Activated B cell treated with CpG ODN at 0.5 μM for 24 hours (primary cell): ENCODE measurements at regions of chr15 and their contacts with region 1.

Region 1: DNA sequence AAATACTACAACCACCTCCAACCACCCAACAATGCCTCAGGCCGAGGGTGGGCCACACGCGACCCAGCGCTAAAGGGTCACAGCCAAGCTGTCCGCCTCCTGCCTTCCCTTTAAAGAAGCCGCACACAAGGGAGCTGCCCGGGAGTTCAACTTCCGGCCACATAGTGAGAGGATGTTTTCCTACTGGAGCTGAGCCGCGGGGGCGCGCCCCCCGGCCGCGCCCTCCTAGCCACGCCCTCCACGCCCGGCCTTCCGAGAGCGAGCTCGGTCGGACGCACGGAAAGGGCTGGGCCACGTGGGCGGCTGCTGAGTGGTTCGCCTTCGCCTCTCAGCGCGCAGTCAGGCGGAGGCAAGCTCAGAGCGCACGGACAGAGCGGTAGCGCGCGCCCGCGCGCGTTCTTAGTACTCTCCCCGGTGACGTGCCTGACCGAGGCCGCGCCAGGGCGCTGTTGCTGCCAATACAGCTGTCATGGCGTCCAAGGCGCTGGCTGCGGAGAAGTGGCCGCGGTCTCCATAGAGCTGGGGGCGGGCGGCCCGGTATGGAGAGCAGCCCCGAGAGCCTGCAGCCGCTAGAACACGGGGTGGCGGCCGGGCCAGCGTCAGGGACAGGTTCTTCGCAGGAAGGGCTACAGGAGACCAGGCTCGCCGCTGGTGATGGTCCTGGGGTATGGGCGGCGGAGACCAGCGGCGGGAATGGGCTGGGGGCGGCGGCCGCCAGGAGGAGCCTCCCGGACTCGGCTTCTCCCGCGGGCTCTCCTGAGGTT is at the start of gene MINDY2:
- DNase-seq: peak; percentile 89
- ATAC-seq: peak; percentile 94
- H3K4me3 Mint-ChIP-seq: peak within 1 kb of the TSS; percentile 93
- H3K27ac Mint-ChIP-seq: peak within 1 kb of the TSS; percentile 96
- H3K4me1 Mint-ChIP-seq: peaks cover 6% of the 10 kb centered on the region
- H3K27me3 Mint-ChIP-seq: no peaks in the 10 kb centered on the region
- CTCF ChIP-seq: no peak
- total RNA-seq, gene MINDY2: 5.8 and 6.2 TPM in 2 replicates

Region 2: DNA sequence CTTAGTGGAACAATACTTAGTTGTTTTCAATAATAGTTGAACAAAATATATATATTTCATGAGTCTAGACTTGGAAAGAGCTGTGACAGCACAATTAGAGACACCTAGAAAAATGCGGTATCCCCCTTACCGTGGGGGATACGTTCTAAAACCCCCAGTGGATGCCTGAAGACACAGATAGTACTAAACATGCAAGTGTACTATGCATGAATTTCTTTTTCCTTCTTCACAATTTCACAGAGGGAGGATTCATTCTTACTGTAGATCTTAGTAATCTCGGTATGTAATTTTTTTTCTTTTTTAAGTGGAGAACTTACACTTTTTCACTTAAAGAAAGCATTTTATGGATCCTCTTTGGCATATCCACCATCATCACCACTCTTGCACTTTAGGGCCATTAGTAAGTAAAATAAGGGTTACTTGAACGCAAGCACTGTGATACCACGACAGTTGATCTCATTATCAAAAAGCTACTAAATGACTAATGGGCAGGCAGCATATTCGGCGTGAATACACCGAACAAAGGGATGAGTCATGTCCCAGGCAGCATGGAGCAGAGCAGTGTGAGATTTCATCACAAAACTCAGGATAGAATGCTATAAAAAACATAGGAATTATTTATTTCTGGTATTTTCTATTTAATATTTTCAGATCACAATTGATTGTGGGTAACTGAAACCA is 1965.4 kb before region 1 on chr15:
- CTCF ChIA-PET with region 1: no interaction called
- POLR2A ChIA-PET with region 1: no interaction called
- intact Hi-C with region 1: no loop called
- DNase-seq: no peak
- ATAC-seq: peak; percentile 77
- H3K4me3 Mint-ChIP-seq: peak overlapping the region; percentile 74
- H3K27ac Mint-ChIP-seq: peak overlapping the region; percentile 68
- H3K4me1 Mint-ChIP-seq: peaks cover 30% of the 10 kb centered on the region
- H3K27me3 Mint-ChIP-seq: no peaks in the 10 kb centered on the region
- CTCF ChIP-seq: no peak

Region 3: DNA sequence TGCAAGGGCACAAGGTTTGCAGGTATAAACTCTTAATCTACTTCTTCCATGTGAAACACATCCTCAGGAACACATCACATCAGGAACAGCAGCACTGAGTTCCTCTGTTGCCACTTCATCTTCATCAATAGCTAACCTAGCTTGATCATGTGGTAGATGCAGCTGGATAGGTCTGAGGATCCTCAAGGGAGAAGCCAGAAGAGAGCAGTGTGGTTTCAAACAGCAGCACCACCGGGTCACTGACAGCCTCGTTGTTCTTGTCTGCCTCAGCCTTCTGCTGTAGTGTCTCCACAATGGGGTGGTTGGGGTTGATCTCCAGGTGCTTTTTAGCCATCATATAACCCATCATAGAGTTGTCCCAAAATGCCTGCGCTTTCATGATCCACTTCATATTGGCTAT is 80.3 kb before region 1 on chr15:
- CTCF ChIA-PET with region 1: interaction called, 8 read pairs
- POLR2A ChIA-PET with region 1: interaction called, 7 read pairs
- intact Hi-C with region 1: loop called (anchors 1 kb)
- DNase-seq: no peak
- ATAC-seq: peak; percentile 97
- H3K4me3 Mint-ChIP-seq: no peak overlapping the region
- H3K27ac Mint-ChIP-seq: no peak overlapping the region
- H3K4me1 Mint-ChIP-seq: peaks cover 33% of the 10 kb centered on the region
- H3K27me3 Mint-ChIP-seq: no peaks in the 10 kb centered on the region
- CTCF ChIP-seq: no peak

Region 4: GRCh38 chr15:58732625-58733363 is 38.2 kb before region 1 on chr15:
- CTCF ChIA-PET with region 1: no interaction called
- POLR2A ChIA-PET with region 1: no interaction called
- intact Hi-C with region 1: no loop called
- DNase-seq: no peak
- ATAC-seq: no peak
- H3K4me3 Mint-ChIP-seq: no peak overlapping the region
- H3K27ac Mint-ChIP-seq: no peak overlapping the region
- H3K4me1 Mint-ChIP-seq: peaks cover 70% of the 10 kb centered on the region
- H3K27me3 Mint-ChIP-seq: no peaks in the 10 kb centered on the region
- CTCF ChIP-seq: no peak

Region 5: DNA sequence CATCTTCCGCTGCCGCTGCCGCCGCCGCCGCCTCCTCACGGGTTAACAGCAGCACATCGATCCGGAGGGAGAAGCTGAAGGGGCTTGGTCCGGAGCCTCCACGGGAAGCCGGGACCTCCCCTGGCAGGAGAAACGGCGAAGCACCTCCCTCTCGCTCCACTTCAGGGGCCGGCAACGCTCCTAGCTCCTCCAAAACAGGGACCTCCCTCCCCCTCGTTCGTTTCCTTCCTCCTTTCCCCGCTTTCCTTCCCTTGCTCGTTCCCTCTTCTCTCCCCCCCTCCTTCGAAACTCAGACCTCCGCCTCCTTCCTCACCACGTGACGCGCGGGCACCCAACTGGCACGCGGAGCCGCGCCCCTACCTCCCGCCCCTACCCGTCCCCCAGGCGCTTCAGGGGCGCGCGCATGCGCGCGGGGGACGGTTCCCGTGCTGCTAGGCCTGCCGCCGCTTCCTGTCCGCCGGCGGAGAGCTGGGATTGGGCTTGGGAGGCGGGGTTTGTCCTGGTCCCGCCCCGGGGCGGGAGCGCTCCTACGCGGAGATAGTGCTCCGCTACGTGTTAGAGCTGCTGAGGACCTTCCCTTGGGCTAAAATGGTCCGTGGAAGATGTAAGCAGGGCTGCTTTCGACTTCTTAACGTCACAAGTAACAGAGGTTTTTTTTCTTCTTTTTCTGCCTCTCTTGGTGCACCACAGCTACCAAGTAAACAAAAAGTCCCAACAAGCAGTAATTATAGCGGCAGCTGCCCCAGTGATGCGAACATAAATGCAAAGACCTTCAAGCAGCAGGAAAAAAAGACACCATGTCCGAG is 21.3 kb before region 1 on chr15 and contains the start of gene ADAM10:
- CTCF ChIA-PET with region 1: interaction called, 19 read pairs
- POLR2A ChIA-PET with region 1: interaction called, 78 read pairs
- intact Hi-C with region 1: loop called (anchors 1 kb)
- DNase-seq: peak; percentile 95
- ATAC-seq: peak; percentile 92
- H3K4me3 Mint-ChIP-seq: peak within 1 kb of the TSS; percentile 96
- H3K27ac Mint-ChIP-seq: peak within 1 kb of the TSS; percentile 97
- H3K4me1 Mint-ChIP-seq: peaks cover 44% of the 10 kb centered on the region
- H3K27me3 Mint-ChIP-seq: no peaks in the 10 kb centered on the region
- CTCF ChIP-seq: no peak
- total RNA-seq, gene ADAM10: 87.7 and 91.6 TPM in 2 replicates

Region 6: DNA sequence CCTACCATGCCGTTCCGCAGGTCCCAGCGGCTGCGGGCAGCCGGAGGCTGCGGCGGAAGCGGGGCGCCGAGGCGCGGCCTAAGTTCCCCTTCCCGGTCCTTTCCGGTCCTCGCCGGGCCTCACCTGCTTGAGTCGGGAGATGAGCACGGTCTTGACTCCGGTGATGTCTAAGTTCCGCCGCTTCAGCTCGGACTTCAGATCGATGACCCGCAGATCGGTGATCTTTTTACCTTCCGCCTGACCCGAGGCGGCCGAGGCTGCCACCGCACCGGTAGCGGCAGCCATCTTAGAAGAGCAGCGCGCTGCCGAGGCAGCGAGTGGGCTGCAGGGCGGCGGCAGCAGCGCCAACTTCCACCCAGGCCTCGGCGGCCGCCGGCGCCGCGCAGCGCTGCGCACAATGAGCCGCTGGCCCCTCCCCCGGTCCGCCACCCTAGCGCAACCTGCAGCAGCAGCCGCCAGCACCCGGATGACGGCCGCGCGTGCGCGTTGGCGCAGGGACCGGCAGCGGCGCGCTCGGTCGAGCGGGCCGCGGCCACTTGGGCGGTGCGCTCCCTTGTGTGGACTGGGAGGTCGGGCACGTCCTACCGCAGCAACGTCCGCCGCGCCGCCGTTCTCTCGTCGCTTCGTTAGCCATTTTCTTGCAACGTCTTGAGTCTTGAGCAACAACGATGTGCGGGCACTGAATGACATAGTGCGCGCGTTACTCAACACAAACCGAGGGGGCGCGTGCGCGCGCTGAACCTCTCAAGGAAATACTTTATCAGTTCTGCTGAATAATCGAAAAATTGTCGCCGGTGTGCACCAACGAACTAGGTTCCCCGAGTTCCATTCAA is 162.5 kb after region 1 on chr15 and contains the start of gene SLTM:
- CTCF ChIA-PET with region 1: no interaction called
- POLR2A ChIA-PET with region 1: interaction called, 15 read pairs
- intact Hi-C with region 1: loop called (anchors 1 kb)
- DNase-seq: peak; percentile 87
- ATAC-seq: peak; percentile 91
- H3K4me3 Mint-ChIP-seq: peak within 1 kb of the TSS; percentile 99
- H3K27ac Mint-ChIP-seq: peak within 1 kb of the TSS; percentile 100
- H3K4me1 Mint-ChIP-seq: peaks cover 29% of the 10 kb centered on the region
- H3K27me3 Mint-ChIP-seq: no peaks in the 10 kb centered on the region
- CTCF ChIP-seq: no peak
- total RNA-seq, gene SLTM: 124 and 159 TPM in 2 replicates

Region 7: DNA sequence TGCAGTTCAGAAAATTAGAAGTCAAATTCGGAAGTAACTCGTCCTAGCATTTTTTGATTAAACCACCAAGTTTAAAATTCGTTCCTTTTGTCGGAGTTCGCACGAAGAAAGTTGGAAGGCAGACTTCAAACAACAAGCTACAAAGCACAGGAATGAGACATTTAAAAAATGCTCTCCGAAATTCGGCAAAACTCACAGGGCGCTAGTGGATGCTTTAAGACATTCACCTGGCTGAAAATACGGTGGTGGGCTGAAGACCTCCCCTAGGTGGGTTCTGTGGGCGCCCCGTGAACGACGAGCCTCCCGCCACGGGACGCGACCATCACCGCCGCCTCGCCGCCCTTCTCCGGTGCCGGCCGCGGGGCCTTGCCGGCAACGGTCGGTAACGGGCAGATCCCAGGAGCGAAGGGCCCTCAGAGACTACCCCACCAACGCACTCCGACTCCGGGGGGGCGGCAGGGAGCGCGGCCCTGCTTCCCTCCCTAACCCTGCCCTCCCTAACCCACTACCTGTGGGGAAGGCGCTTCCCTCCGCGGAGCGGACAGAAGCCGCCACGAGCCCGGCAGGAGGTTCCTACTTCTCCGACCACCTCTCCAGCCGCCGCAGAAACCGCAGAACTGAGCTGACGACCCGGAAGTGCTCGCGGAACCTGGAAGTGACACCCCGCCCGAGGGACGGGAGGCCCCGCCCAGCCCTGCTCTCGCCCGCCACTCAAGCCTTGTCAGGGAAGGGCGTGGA is 886.0 kb after region 1 on chr15 and contains the start of gene GTF2A2:
- CTCF ChIA-PET with region 1: no interaction called
- POLR2A ChIA-PET with region 1: no interaction called
- intact Hi-C with region 1: loop called (anchors 10 kb)
- DNase-seq: peak; percentile 91
- ATAC-seq: peak; percentile 100
- H3K4me3 Mint-ChIP-seq: no peak within 1 kb of the TSS
- H3K27ac Mint-ChIP-seq: peak within 1 kb of the TSS; percentile 82
- H3K4me1 Mint-ChIP-seq: peaks cover 14% of the 10 kb centered on the region
- H3K27me3 Mint-ChIP-seq: no peaks in the 10 kb centered on the region
- CTCF ChIP-seq: no peak
- total RNA-seq, gene GTF2A2: 77.4 and 95.2 TPM in 2 replicates